Activated T-helper 2 cell treated with anti-CD3 and anti-CD28 coated beads, Interferon-gamma antibody, Interleukin-2, Interleukin-4, amounts not matched to agents 10 μg/mL and 5 μg/mL and 100 μg/mL, durations not matched to agents 14 hours and 24 hours and 36 hours (primary cell): ENCODE measurements at regions of chr18 and their contacts with region 1.

Region 1: DNA sequence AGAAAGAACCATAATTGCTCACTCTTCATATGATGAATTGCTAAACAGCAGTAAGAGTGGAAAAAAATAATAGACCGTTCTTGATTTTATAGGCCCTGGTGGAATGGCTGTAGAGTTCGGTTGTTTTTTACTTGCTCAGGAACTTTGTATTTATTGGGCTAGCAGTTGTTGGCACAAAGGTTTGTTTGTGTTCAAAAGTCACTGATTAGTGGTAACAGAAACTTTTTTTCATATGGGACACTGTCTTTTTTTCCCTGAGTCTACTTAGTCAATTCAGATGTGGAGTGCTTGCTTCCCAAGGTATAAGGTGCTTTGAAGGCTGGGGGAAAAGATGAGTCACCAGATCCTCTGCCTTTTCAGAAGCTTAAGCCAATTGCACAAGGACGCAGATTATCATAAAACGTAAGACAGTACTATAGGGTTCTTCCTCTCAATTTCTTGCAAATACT is 25.8 kb downstream of the PHLPP1 start:
- DNase-seq: no peak
- H3K4me3 Mint-ChIP-seq: no peak overlapping the region
- H3K27ac Mint-ChIP-seq: peak overlapping the region; percentile 40
- H3K4me1 Mint-ChIP-seq: peaks cover 35% of the 10 kb centered on the region
- H3K27me3 Mint-ChIP-seq: no peaks in the 10 kb centered on the region

Region 2: GRCh38 chr18:62771494-62772270 is 30.5 kb after region 1 on chr18:
- intact Hi-C with region 1: loop called (anchors 1 kb)
- DNase-seq: no peak
- H3K4me3 Mint-ChIP-seq: peak overlapping the region; percentile 24
- H3K27ac Mint-ChIP-seq: peak overlapping the region; percentile 87
- H3K4me1 Mint-ChIP-seq: peaks cover 58% of the 10 kb centered on the region
- H3K27me3 Mint-ChIP-seq: no peaks in the 10 kb centered on the region